PC-3 (cell line): ENCODE measurements at regions of chr5 and their contacts with region 1.

Region 1: GRCh38 chr5:121630402-121630801 is 221.3 kb upstream of the FTMT start:
- DNase-seq: peak; percentile 36
- ATAC-seq: peak; percentile 82
- H3K4me3 ChIP-seq: no peak overlapping the region
- H3K27ac ChIP-seq: no peak overlapping the region
- H3K4me1 ChIP-seq: 0 out of 2 replicates have a peak, but pooled peaks cover 3% of the 10 kb centered on the region
- H3K27me3 ChIP-seq: no peaks in the 10 kb centered on the region
- CTCF ChIP-seq: peak; percentile 50

Region 2: GRCh38 chr5:121870489-121870888 is 240.1 kb after region 1 on chr5:
- CTCF ChIA-PET with region 1: no interaction called
- POLR2A ChIA-PET with region 1: no interaction called
- intact Hi-C with region 1: loop called (anchors 1 kb)
- DNase-seq: peak; percentile 31
- ATAC-seq: no peak
- H3K4me3 ChIP-seq: no peak overlapping the region
- H3K27ac ChIP-seq: no peak overlapping the region
- H3K4me1 ChIP-seq: no peaks in the 10 kb centered on the region
- H3K27me3 ChIP-seq: 0 out of 2 replicates have a peak, but pooled peaks cover 5% of the 10 kb centered on the region
- CTCF ChIP-seq: peak; percentile 38

Region 3: DNA sequence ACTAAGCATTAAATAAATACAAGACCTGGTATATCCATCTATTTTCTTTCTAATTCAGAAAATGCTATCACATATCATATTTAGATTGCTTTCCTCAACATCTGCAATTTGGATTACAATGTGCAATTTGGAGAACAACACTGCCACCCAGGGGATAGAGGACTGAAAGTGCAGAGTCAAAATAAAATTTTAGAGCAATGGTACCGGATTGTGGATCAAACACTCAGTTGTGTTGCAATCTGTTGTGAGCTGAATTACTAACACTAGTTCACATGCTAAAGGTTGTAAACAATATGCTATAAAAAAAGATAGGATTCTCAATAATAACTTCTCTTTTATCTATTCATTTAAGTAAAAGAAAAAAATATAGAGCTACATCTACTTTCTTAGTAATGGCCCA is 319.5 kb after region 1 on chr5:
- CTCF ChIA-PET with region 1: no interaction called
- POLR2A ChIA-PET with region 1: no interaction called
- intact Hi-C with region 1: loop called (anchors 2 kb)
- DNase-seq: peak; percentile 62
- ATAC-seq: no peak
- H3K4me3 ChIP-seq: no peak overlapping the region
- H3K27ac ChIP-seq: no peak overlapping the region
- H3K4me1 ChIP-seq: no peaks in the 10 kb centered on the region
- H3K27me3 ChIP-seq: no peaks in the 10 kb centered on the region
- CTCF ChIP-seq: peak; percentile 73